H1 (cell line): ENCODE measurements at regions of chr16 and their contacts with region 1.

Region 1: GRCh38 chr16:88811769-88812512 is at the start of gene APRT:
- DNase-seq: peak; percentile 79 to 99
- H3K4me3 ChIP-seq: peak within 1 kb of the TSS; percentile 67 to 86 (median 82)
- H3K27ac ChIP-seq: peak within 1 kb of the TSS; percentile 85
- H3K4me1 ChIP-seq: peaks cover 0 to 11% (median 4%) of the 10 kb centered on the region in 4 experiments; a peak in 5 of 7 replicates
- H3K27me3 ChIP-seq: no peaks in the 10 kb centered on the region
- CTCF ChIP-seq: peak in 2 of 3 experiments; percentile 38 to 47; a peak in 2 of 4 replicates
- EP300 ChIP-seq: no peak
- POLR2A ChIP-seq: peak in 1 of 2 experiments; percentile 81; a peak in 2 of 3 replicates
- RAD21 ChIP-seq: peak; percentile 55 to 68
- total RNA-seq, gene APRT: 221 and 244 TPM in 2 replicates

Region 2: DNA sequence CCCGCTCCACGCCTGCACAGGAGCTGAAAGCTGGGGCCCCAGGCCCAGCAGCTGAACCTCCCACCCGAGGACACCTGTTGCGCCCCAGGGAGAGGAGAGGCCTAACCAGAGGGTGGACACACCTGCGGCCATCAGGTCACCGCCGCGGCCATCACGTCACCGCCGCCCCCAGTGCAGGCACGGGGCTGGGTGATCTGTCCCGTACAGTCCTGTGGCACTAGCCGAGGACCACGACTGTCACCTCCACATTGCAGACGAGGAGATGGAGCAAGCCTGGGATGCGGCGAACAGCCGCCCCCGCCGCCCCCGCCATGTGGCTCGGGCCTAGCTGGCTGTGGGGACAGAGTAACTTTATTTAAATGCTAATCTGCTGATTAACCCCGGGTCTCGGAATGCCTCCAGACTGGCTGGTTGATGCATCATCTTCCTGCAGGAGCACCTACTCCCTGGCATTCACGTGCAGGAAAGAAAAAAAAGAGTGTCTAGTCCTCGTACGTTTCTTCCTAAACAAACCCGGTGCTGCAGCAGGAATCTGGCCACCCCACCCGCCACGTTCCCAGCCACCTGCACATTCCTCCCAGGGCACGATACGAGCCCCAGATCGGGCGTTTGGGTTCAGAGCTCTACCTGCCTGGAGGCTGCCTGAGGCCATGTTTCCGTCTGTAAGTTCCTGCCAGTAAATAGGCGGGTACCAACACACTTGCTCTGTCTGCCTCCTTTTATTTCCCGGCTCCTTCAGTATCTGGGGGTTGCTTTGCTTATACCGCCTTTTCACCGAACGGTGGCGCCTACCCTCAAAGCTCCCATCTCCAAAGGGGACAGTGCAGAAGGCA is 56.8 kb before region 1 on chr16:
- CTCF ChIA-PET with region 1: interaction called, 4 read pairs
- POLR2A ChIA-PET with region 1: interaction called, 13 read pairs
- DNase-seq: no peak
- H3K4me3 ChIP-seq: no peak overlapping the region
- H3K27ac ChIP-seq: no peak overlapping the region
- H3K4me1 ChIP-seq: peaks cover 0 to 20% (median 7%) of the 10 kb centered on the region in 4 experiments; a peak in 4 of 7 replicates
- H3K27me3 ChIP-seq: no peaks in the 10 kb centered on the region
- CTCF ChIP-seq: no peak
- EP300 ChIP-seq: no peak
- POLR2A ChIP-seq: no peak
- RAD21 ChIP-seq: no peak

Region 3: GRCh38 chr16:88785106-88785924 is 26.6 kb before region 1 on chr16 and contains the start of gene PIEZO1:
- CTCF ChIA-PET with region 1: interaction called, 10 read pairs
- POLR2A ChIA-PET with region 1: no interaction called
- DNase-seq: no peak
- H3K4me3 ChIP-seq: peak within 1 kb of the TSS; percentile 28 to 71 (median 50)
- H3K27ac ChIP-seq: no peak within 1 kb of the TSS
- H3K4me1 ChIP-seq: peaks cover 0 to 8% (median 4%) of the 10 kb centered on the region in 4 experiments; a peak in 5 of 7 replicates
- H3K27me3 ChIP-seq: peaks cover 0 to 6% (median 3%) of the 10 kb centered on the region in 4 experiments; a peak in 3 of 7 replicates
- CTCF ChIP-seq: peak; percentile 49 to 67 (median 55)
- EP300 ChIP-seq: no peak
- POLR2A ChIP-seq: no peak; a peak in 1 of 3 replicates
- RAD21 ChIP-seq: peak; percentile 21 to 54; a peak in 3 of 4 replicates
- total RNA-seq, gene PIEZO1: 63.6 and 67.5 TPM in 2 replicates

Region 4: DNA sequence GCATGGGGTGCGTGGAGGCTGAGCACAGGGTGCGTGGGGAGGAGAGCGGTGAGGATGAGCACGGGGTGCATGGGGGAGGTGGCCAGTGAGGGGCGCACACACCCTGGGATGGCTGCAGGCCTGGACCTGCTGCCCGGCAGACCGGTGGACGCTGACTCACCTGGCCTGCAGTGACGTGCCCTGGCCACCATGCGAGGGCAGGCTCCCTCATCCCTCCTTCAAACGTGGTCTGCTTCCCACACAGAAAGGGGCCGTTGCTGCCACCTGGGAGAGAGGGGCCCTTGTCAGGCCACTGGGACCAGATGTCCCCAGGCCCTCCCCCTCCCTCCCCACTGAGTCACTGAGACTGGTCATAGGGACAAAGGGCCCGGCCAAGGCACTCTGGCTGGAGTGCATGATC is 19.9 kb after region 1 on chr16:
- CTCF ChIA-PET with region 1: interaction called, 10 read pairs
- POLR2A ChIA-PET with region 1: interaction called, 8 read pairs
- DNase-seq: no peak
- H3K4me3 ChIP-seq: no peak overlapping the region
- H3K27ac ChIP-seq: no peak overlapping the region
- H3K4me1 ChIP-seq: 0 out of 7 replicates have a peak, but pooled peaks cover 0 to 2% (median 0%) of the 10 kb centered on the region in 4 experiments
- H3K27me3 ChIP-seq: no peaks in the 10 kb centered on the region
- CTCF ChIP-seq: peak in 2 of 3 experiments; percentile 28 to 53; a peak in 2 of 4 replicates
- EP300 ChIP-seq: no peak
- POLR2A ChIP-seq: no peak
- RAD21 ChIP-seq: peak; percentile 13 to 14; a peak in 1 of 4 replicates

Region 5: GRCh38 chr16:88881007-88881615 is 69.2 kb after region 1 on chr16:
- CTCF ChIA-PET with region 1: interaction called, 15 read pairs
- POLR2A ChIA-PET with region 1: interaction called, 5 read pairs
- DNase-seq: no peak
- H3K4me3 ChIP-seq: 0 out of 8 replicates have a peak overlapping the region, but pooled peaks of 1 of the 4 experiments have one; percentile 24
- H3K27ac ChIP-seq: no peak overlapping the region
- H3K4me1 ChIP-seq: peaks cover 0 to 9% (median 4%) of the 10 kb centered on the region in 4 experiments; a peak in 4 of 7 replicates
- H3K27me3 ChIP-seq: peaks cover 0 to 7% (median 1%) of the 10 kb centered on the region in 4 experiments; a peak in 2 of 7 replicates
- CTCF ChIP-seq: no peak
- EP300 ChIP-seq: no peak
- POLR2A ChIP-seq: no peak
- RAD21 ChIP-seq: no peak

Region 6: GRCh38 chr16:89200124-89200849 is 388.3 kb after region 1 on chr16 and contains the start of gene SLC22A31:
- CTCF ChIA-PET with region 1: interaction called, 3 read pairs
- POLR2A ChIA-PET with region 1: interaction called, 13 read pairs
- DNase-seq: peak in 1 of 2 experiments; percentile 66
- H3K4me3 ChIP-seq: peak within 1 kb of the TSS; percentile 36 to 67 (median 48)
- H3K27ac ChIP-seq: no peak within 1 kb of the TSS
- H3K4me1 ChIP-seq: peaks cover 0 to 12% (median 8%) of the 10 kb centered on the region in 4 experiments; a peak in 5 of 7 replicates
- H3K27me3 ChIP-seq: peaks cover 11 to 40% (median 30%) of the 10 kb centered on the region in 4 experiments
- CTCF ChIP-seq: no peak
- EP300 ChIP-seq: no peak
- POLR2A ChIP-seq: no peak
- RAD21 ChIP-seq: no peak
- total RNA-seq, gene SLC22A31: 10.6 and 11.1 TPM in 2 replicates